Calu3 (cell line): ENCODE measurements at regions of chr2 and their contacts with region 1.

Region 1: GRCh38 chr2:54545702-54546450 is 89.7 kb downstream of the SPTBN1 start:
- DNase-seq: peak; percentile 65
- H3K4me3 Mint-ChIP-seq: peak overlapping the region; percentile 12
- H3K27ac Mint-ChIP-seq: peak overlapping the region; percentile 85
- H3K4me1 Mint-ChIP-seq: peaks cover 78% of the 10 kb centered on the region
- H3K27me3 Mint-ChIP-seq: no peaks in the 10 kb centered on the region
- CTCF ChIP-seq: no peak

Region 2: DNA sequence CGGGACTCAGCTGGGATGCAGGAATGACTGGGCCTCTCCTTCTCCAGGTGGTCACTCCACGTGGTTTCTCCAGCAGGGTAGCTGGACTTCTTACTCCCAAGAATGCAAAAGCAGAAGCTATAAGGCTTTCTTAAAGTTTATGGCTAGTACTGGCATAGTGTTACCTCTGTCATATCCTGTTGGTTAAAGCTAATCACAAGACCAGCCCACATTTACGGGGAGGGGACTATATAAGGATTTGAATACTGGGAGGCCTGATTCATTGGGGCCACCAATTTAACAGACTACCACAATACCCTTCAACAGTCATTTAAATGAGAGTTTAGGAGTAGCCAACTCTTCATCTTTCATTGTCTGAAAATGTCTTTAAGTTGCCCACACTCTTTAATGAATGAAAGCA is 195.4 kb before region 1 on chr2:
- CTCF ChIA-PET with region 1: no interaction called
- intact Hi-C with region 1: no loop called
- DNase-seq: no peak
- H3K4me3 Mint-ChIP-seq: no peak overlapping the region
- H3K27ac Mint-ChIP-seq: no peak overlapping the region
- H3K4me1 Mint-ChIP-seq: no peaks in the 10 kb centered on the region
- H3K27me3 Mint-ChIP-seq: peaks cover 15% of the 10 kb centered on the region
- CTCF ChIP-seq: no peak

Region 3: DNA sequence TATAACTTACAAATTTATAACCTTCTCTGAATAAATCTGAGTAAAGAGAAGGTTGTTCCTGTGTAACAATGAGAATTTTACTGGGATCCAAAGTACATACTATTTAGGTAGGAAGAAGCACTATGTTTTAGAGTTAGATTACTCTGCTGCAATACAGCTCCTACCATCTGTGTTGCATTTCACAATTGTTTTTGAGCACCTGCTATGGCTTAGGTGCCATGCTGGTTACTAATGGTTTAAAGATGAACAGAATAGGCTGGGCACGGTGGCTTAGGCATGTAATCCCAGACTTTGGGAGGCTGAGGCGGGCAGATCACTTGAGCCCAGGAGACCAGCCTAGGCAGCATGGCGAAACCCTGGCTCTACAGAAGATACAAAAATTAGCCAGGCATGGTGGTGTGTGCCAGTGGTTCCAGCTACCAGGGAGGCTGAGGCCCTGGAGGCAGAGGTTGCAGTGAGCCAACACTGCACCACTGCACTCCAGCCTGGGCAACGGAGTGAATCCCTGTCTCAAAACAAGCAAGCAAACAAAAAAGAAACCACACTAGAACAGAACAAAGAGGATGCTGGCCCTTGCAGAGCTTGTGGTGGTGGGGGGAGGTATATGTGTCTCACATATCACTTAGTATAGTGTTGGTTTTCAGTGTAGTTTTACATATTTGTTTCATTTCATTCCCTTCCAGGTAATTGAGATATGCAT is 33.1 kb before region 1 on chr2:
- CTCF ChIA-PET with region 1: no interaction called
- intact Hi-C with region 1: no loop called
- DNase-seq: no peak
- H3K4me3 Mint-ChIP-seq: no peak overlapping the region
- H3K27ac Mint-ChIP-seq: no peak overlapping the region
- H3K4me1 Mint-ChIP-seq: no peaks in the 10 kb centered on the region
- H3K27me3 Mint-ChIP-seq: no peaks in the 10 kb centered on the region
- CTCF ChIP-seq: no peak

Region 4: DNA sequence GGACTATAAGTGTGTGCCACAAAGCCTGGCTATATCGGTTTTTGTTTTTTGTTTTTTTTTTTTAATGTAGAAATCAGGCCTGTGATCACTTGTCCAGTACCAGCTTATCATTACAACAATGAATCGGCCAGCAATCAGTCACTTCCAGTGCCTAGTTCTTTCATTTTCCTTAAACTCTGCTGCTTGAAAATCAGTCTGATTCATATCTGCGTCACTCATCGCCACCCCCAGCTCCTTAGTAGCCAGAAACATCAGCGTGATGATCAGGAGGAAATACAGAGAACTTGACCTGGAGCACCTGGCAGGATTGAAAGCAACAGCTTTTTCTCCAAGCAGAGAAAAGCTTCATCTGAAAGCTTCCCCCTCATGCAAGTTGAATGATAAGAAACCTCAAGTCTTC is 14.3 kb before region 1 on chr2:
- CTCF ChIA-PET with region 1: interaction called, 8 read pairs
- intact Hi-C with region 1: loop called (anchors 1 kb)
- DNase-seq: peak; percentile 68
- H3K4me3 Mint-ChIP-seq: peak overlapping the region; percentile 55
- H3K27ac Mint-ChIP-seq: peak overlapping the region; percentile 97
- H3K4me1 Mint-ChIP-seq: peaks cover 83% of the 10 kb centered on the region
- H3K27me3 Mint-ChIP-seq: no peaks in the 10 kb centered on the region
- CTCF ChIP-seq: no peak